ENCODE measurements at regions of chr18 and their contacts with region 1.

Region 1: DNA sequence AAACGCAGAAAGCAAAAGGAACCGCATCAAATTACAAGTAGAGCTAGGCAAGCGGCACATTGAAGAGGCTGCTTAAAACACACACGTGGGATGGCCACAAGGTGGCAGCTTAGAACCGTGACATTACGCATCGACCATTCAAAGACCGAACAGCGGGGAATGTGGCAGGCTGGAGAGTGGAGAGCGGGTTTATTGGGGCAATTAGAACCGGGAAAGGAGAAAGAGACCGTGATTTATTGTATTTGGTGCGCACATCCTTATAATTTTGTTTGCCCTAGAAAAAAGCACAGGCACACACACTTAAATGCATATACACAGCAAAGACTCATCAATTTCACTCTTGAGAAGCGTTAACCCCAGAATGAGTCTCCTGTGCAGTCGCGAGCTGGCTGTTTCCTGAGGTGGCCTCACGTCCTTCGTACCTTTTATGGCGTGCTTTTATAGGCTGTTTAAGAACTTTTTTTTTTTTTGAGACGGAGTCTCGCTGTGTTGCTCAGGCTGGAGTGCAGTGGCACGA is 31.7 kb upstream of the MEP1B start:
- DNase-seq: peak; percentile 97

Region 2: DNA sequence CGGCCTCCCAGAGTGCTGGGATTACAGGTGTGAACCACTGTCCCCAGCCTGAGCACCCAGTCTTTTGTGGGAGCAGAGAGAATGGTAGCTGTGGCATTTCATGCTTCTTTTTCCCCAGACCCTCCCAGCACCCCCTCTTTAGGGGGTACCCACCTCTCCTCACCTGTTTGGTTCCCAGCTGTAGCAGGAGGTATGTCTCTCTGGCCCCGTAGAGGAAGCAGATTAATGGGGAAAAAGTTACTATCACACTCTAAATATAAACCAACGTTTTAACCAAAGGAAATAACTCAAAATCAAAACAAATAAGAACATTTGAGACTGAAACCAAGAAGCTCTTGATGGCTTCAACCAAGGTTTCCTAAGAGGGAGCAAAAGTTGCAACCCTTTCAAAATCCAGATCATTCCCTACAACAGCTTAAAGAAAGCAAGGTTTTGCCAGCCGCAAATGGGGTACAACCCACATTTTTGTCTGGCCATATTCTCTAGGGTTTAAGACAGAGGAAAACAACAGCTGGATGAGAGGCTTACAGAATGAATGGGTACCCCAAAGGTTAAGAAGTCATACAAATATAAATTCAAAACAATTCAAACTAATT is 131.6 kb before region 1 on chr18:
- CTCF ChIA-PET with region 1: no interaction called
- POLR2A ChIA-PET with region 1: no interaction called
- DNase-seq: no peak

Region 3: GRCh38 chr18:32545631-32546030 is 387.5 kb after region 1 on chr18:
- CTCF ChIA-PET with region 1: interaction called, 84 read pairs
- POLR2A ChIA-PET with region 1: interaction called, 3 read pairs
- DNase-seq: no peak

Region 4: DNA sequence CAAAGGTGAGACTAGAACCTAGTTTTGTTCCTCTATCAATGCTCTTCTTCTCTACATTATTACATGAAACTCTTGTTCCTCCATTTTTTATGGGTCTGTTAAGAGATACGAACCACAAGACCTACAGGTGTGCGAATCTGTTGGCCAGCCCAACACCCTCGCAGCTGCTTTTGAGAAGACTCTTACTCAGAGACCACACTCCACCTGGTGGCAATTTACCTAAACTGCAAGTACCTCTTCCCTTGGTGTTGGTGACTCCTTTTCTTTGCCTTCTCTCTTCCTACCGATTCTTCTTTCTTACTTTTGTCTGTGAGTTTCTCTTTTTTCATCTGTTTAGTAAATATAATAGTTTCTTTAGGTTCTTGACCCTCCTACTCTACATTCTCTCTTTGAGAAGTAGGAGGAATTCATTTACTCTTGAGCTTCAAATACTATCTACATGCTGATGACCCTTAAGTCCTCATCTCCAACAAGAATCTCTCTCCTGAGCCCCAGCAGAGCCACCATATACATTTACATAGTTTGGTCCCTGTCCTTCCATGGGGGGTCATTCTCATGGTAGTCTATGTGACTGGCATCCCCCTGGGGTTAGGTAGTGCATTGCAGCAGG is 394.4 kb after region 1 on chr18:
- CTCF ChIA-PET with region 1: interaction called, 84 read pairs
- POLR2A ChIA-PET with region 1: interaction called, 7 read pairs
- DNase-seq: peak; percentile 85